ENCODE measurements at regions of chr14 and their contacts with region 1.

Region 1: DNA sequence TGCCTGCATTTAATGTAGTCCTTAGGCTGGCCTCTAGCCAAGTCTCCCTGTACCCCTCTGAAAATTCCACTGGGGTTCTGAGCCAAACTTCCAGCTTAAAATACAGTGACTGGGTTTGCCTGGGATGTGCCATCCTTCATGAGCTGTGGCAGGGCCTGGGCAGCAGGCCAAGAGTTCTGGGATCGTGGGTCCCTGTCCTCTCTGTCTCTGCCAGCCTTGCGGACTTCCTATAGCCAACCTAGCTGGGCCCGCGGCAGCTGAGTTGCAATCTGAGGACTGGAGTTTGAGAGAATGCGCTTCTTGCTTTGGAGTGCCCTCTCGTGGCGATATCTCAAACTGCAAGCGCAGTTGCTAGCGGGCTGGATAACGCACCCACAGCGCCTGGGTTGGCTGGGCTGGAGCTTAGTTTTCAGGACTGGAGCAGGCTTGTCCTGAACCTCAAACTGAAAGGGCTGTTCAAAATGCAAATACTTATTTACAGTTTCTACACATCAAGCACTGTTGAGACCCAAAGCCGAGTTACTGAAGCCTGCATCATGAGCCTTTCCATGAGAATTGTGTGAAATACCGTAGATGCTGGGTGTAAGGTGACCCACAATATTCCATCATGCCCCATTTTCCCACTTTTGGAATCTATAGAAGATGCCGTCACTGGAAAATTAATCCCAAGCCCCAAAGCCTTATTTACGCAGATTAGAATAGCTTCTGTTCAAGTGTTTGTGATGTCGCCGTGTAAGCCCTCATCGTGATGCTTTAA is 7.3 kb upstream of the IFI27L2 start:
- DNase-seq: peak; percentile 80
- H3K4me3 ChIP-seq: no peak overlapping the region
- H3K27ac ChIP-seq: no peak overlapping the region
- H3K4me1 ChIP-seq: no peaks in the 10 kb centered on the region
- H3K27me3 ChIP-seq: peaks cover 3 to 11% of the 10 kb centered on the region in 2 experiments
- CTCF ChIP-seq: peak; percentile 95 to 96
- POLR2A ChIP-seq: no peak

Region 2: DNA sequence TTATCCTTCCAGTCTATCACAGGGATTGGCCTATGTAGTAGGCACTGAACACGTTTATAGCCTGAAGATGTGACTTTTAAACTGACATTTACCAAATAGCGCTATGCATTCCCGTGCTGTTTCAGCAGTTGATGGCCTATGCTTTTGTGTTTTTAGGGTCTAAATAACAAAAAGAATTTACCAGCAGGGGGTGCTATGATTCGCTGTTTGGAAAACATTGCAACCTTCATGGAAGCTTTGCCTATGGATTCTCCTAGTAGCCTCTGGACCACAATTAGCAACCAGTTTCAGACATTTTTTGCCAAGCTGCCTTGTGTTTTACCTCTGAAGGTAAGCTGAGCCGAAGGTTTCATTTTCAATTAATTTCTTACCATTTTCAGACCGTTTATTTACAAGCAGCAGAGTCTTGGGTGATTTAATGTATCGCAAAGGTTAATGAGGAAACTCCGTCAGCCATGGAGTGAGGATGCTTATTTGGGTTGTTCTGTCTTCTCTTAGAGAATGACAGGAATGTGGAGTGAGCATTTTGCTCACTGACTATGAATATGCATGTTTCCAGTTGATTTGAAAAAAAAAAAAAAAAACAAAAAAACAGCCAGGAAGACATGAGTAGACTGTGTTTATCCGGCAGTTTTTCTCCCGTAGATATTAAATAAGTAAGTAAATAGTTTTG is 481.5 kb before region 1 on chr14:
- CTCF ChIA-PET with region 1: interaction called, 9 read pairs
- POLR2A ChIA-PET with region 1: no interaction called
- dilution Hi-C with region 1: no loop called
- intact Hi-C with region 1: loop called (anchors 10 kb)
- DNase-seq: peak; percentile 22
- H3K4me3 ChIP-seq: no peak overlapping the region
- H3K27ac ChIP-seq: no peak overlapping the region
- H3K4me1 ChIP-seq: no peaks in the 10 kb centered on the region
- H3K27me3 ChIP-seq: no peaks in the 10 kb centered on the region
- CTCF ChIP-seq: peak; percentile 19 to 29
- POLR2A ChIP-seq: no peak

Region 3: DNA sequence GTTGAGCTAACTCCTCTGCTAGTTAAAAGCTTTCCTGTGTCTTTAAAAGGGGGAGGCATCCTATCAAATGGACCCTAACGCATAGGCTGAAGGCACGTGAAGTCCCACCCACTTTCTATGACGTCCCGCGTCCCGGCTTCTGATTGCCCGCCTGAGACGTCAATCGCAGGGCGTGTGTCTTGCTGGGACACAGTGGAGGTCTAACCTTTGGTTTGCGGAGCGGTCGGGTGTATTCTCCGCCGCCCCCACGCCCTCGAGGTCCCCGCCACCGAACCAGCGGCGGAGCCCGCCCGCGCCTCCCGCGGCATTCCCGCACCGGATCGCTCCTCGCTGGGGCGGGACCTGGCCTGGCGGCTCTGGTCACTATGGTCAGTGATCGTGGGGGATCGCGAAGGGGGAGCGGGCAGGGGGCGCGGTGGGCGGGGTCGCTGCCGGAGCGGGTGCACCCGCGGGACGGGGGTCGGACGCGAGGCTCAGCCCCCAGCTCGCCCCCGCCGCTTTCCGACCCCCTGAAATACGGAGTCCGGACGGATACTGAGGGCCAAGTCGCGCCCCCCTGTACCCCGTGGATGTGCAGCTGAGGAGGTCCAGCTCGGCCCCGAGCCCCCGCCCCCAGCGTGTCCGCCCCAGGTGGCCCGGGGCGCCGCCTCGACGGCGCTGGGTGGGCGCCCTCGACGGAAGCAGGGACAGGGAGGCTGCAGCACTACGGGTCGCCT is 110.4 kb before region 1 on chr14 and contains the start of gene OTUB2:
- CTCF ChIA-PET with region 1: interaction called, 30 read pairs
- POLR2A ChIA-PET with region 1: no interaction called
- dilution Hi-C with region 1: no loop called
- intact Hi-C with region 1: no loop called
- DNase-seq: peak; percentile 99
- H3K4me3 ChIP-seq: peak within 1 kb of the TSS in 2 of 3 experiments; percentile 29 to 50
- H3K27ac ChIP-seq: no peak within 1 kb of the TSS
- H3K4me1 ChIP-seq: peaks cover 10% of the 10 kb centered on the region
- H3K27me3 ChIP-seq: peaks cover 0 to 4% of the 10 kb centered on the region in 2 experiments
- CTCF ChIP-seq: no peak
- POLR2A ChIP-seq: no peak
- total RNA-seq, gene OTUB2: 1.1 and 1.6 TPM in 2 replicates

Region 4: GRCh38 chr14:94051115-94051514 is 85.6 kb before region 1 on chr14:
- CTCF ChIA-PET with region 1: interaction called, 133 read pairs
- POLR2A ChIA-PET with region 1: interaction called, 5 read pairs
- dilution Hi-C with region 1: no loop called
- intact Hi-C with region 1: loop called (anchors 1 kb)
- DNase-seq: peak; percentile 40
- H3K4me3 ChIP-seq: no peak overlapping the region
- H3K27ac ChIP-seq: no peak overlapping the region
- H3K4me1 ChIP-seq: peaks cover 3% of the 10 kb centered on the region
- H3K27me3 ChIP-seq: no peaks in the 10 kb centered on the region
- CTCF ChIP-seq: peak in 1 of 2 donors; percentile 59
- POLR2A ChIP-seq: no peak

Region 5: DNA sequence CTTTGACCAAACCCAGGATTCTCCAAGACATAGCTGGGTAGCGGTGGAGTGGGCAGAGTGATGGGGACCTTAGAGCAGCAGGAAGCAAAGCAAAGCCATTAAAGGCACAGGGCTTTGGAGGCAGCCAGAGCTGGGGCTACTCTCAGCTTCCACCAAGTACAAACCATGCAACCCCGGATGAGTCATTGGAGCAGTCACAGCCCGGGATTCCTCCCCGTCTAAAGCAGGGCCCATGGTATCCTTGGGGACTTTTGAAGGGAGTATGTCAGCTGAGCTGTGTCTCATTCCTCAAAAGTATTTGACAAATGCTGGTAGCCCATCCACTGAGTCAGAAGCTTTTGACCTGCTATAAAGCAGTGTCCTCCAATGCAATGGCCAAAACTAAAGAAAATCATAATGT is 35.9 kb before region 1 on chr14:
- CTCF ChIA-PET with region 1: interaction called, 10 read pairs
- POLR2A ChIA-PET with region 1: interaction called, 6 read pairs
- dilution Hi-C with region 1: no loop called
- intact Hi-C with region 1: no loop called
- DNase-seq: no peak
- H3K4me3 ChIP-seq: no peak overlapping the region
- H3K27ac ChIP-seq: no peak overlapping the region
- H3K4me1 ChIP-seq: no peaks in the 10 kb centered on the region
- H3K27me3 ChIP-seq: no peaks in the 10 kb centered on the region
- CTCF ChIP-seq: no peak
- POLR2A ChIP-seq: no peak

Region 6: DNA sequence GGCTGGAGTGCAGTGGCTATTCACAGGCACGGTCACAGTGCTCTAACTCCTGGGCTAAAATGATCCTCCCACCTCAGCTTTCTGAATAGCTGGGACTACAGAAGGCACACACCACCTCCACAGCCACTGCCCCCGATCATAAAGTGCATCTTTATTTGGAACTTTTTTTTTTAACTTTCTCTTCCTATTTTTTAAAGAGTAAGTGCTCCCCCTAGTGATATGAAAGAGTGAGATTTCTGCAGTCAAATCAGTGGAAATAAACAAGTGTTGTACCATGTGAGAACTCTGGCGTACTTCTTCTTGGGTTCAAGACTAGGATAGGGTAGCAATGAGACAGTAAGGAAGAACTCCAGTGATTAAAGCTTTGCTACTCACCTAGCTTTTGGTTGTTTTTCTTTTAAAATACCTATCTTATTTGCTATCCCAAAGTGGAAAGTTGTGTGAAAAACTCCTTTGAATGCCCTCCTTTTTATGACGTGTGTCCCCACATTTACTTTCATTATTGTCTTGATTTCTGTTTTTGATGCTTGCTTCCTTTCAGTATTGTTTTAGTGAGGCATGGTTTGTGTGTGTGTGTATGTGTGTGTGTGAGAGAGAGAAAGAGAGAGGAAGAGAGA is 44.0 kb after region 1 on chr14:
- CTCF ChIA-PET with region 1: interaction called, 16 read pairs
- POLR2A ChIA-PET with region 1: no interaction called
- dilution Hi-C with region 1: no loop called
- intact Hi-C with region 1: loop called (anchors 1 kb)
- DNase-seq: peak; percentile 48
- H3K4me3 ChIP-seq: no peak overlapping the region
- H3K27ac ChIP-seq: no peak overlapping the region
- H3K4me1 ChIP-seq: no peaks in the 10 kb centered on the region
- H3K27me3 ChIP-seq: peaks cover 22 to 54% of the 10 kb centered on the region in 2 experiments
- CTCF ChIP-seq: peak; percentile 30 to 40
- POLR2A ChIP-seq: no peak

Measured in endothelial cell of umbilical vein (primary cell).